Testis (tissue), 5 donors: ENCODE measurements at regions of chr6 and their contacts with region 1.

Region 1: GRCh38 chr6:18122124-18123093 is at the start of gene NHLRC1:
- DNase-seq: peak; percentile 93
- H3K4me3 ChIP-seq: peak within 1 kb of the TSS; percentile 54 to 59
- H3K27ac ChIP-seq: peak within 1 kb of the TSS in 1 of 2 donors; percentile 41
- H3K4me1 ChIP-seq: no peaks in the 10 kb centered on the region
- H3K27me3 ChIP-seq: no peaks in the 10 kb centered on the region
- CTCF ChIP-seq: peak; percentile 81 to 97 (median 95)
- POLR2A ChIP-seq: no peak
- total RNA-seq, gene NHLRC1: 3.1 to 3.8 TPM

Region 2: GRCh38 chr6:17808609-17809008 is 313.8 kb before region 1 on chr6:
- intact Hi-C with region 1: loop called (anchors 10 kb)
- DNase-seq: no peak
- H3K4me3 ChIP-seq: no peak overlapping the region
- H3K27ac ChIP-seq: no peak overlapping the region
- H3K4me1 ChIP-seq: no peaks in the 10 kb centered on the region
- H3K27me3 ChIP-seq: no peaks in the 10 kb centered on the region
- CTCF ChIP-seq: no peak
- POLR2A ChIP-seq: no peak